Adrenal gland (tissue), 19 donors: ENCODE measurements at regions of chr3 and their contacts with region 1.

Region 1: GRCh38 chr3:81871358-81872155 is 110.1 kb upstream of the GBE1 start:
- DNase-seq: no peak
- H3K4me3 ChIP-seq: no peak overlapping the region
- H3K27ac ChIP-seq: no peak overlapping the region
- H3K4me1 ChIP-seq: no peaks in the 10 kb centered on the region
- H3K27me3 ChIP-seq: no peaks in the 10 kb centered on the region
- CTCF ChIP-seq: peak; percentile 30 to 59 (median 46)
- POLR2A ChIP-seq: no peak

Region 2: DNA sequence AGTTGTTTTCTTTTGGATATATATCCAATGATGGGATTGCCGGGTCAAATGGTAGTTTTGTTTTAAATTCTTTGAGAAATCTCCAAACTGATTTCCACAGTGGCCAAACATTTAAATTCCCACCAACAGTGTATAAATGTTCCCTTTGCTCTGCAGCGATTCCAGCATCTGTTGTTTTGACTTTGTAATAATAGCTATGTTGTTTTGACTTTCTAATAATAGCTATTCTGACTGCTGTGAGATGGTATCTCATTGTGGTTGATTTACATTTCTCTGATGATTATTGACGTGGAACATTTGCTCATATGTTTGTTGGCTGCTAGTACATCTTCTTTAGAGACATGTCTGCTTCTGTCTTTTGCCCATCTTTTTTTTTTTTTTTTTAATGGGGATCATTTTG is 222.1 kb after region 1 on chr3:
- intact Hi-C with region 1: no loop called
- DNase-seq: no peak
- H3K4me3 ChIP-seq: no peak overlapping the region
- H3K27ac ChIP-seq: no peak overlapping the region
- H3K4me1 ChIP-seq: no peaks in the 10 kb centered on the region
- H3K27me3 ChIP-seq: no peaks in the 10 kb centered on the region
- CTCF ChIP-seq: no peak
- POLR2A ChIP-seq: no peak

Region 3: DNA sequence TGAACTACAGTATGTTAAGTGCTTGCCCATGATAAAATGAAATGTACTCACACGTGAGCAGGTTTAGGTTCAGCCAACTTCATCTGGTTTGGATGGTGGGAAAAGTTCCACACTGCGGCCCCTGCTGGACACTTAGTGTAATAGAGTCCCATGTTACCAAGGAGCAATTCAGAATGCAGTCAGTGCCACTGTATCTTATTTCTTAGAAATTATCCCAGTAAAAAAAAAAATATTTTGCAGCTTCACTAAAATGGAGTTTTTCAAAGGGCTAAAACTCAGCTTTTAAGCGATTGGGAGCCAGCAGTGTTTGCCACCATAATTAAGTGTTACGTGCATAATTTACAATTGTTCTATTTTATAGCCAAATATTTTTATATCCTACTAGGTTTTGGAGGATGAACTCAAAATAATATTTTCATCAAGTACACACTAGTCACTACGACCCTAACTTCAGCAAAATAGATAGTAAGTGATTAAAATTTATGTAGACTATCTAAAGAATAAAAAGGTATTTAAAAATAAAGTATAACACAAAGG is 261.6 kb after region 1 on chr3:
- intact Hi-C with region 1: loop called in 1 of 2 experiments (anchors 5 kb)
- DNase-seq: peak; percentile 26 to 83 (median 69)
- H3K4me3 ChIP-seq: no peak overlapping the region
- H3K27ac ChIP-seq: no peak overlapping the region
- H3K4me1 ChIP-seq: peaks cover 0 to 2% of the 10 kb centered on the region in 2 donors
- H3K27me3 ChIP-seq: no peaks in the 10 kb centered on the region
- CTCF ChIP-seq: peak; percentile 72 to 89 (median 79)
- POLR2A ChIP-seq: no peak

Region 4: DNA sequence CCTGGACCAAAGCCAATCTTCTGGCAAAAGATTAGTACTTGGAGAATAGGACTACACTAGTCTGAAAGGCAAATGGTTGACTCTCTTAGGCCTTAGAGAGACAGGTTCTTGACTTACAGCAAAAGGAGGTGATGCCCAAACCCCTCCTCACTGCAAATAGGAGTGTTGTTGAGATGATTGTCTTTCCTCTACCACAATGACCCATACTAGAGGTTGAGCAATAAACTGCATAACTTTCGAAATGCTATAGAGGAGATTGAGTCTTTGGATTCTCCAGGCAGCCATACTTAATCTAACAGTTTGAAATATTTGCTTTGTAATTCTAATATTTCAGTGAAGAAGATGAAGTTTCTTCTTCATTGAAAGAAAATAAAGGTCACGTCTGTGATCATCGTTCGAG is 388.4 kb after region 1 on chr3:
- intact Hi-C with region 1: no loop called
- DNase-seq: no peak
- H3K4me3 ChIP-seq: no peak overlapping the region
- H3K27ac ChIP-seq: no peak overlapping the region
- H3K4me1 ChIP-seq: no peaks in the 10 kb centered on the region
- H3K27me3 ChIP-seq: no peaks in the 10 kb centered on the region
- CTCF ChIP-seq: no peak
- POLR2A ChIP-seq: no peak